Activated T-helper 2 cell treated with anti-CD3 and anti-CD28 coated beads, Interferon-gamma antibody, Interleukin-2, Interleukin-4, amounts not matched to agents 10 μg/mL and 5 μg/mL and 100 μg/mL, durations not matched to agents 14 hours and 24 hours and 36 hours (primary cell): ENCODE measurements at regions of chr15 and their contacts with region 1.

Region 1: GRCh38 chr15:82108489-82109078 is 62.8 kb upstream of the MEX3B start:
- DNase-seq: peak; percentile 59
- H3K4me3 Mint-ChIP-seq: no peak overlapping the region
- H3K27ac Mint-ChIP-seq: no peak overlapping the region
- H3K4me1 Mint-ChIP-seq: no peaks in the 10 kb centered on the region
- H3K27me3 Mint-ChIP-seq: no peaks in the 10 kb centered on the region

Region 2: DNA sequence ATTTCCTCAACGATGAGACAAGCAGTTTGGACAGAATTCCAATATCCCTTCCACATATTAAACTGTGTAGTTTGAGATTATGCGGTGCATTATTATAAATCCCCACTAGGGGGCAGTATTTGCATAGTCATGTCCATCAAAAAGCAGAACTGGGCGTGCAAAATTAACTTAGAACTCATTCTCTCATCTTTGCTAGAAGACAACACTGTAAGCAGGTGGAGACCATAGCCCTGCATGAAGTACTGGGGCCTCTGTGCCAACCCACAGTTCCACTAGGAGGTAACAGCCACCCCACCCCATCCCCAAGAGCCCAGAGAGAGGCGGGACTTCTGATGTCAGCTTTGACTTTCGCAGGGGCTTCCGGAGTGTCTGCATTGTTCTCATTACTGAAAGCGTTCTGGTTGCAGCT is 627.9 kb before region 1 on chr15:
- intact Hi-C with region 1: loop called (anchors 10 kb)
- DNase-seq: no peak
- H3K4me3 Mint-ChIP-seq: no peak overlapping the region
- H3K27ac Mint-ChIP-seq: no peak overlapping the region
- H3K4me1 Mint-ChIP-seq: no peaks in the 10 kb centered on the region
- H3K27me3 Mint-ChIP-seq: peaks cover 6% of the 10 kb centered on the region

Region 3: DNA sequence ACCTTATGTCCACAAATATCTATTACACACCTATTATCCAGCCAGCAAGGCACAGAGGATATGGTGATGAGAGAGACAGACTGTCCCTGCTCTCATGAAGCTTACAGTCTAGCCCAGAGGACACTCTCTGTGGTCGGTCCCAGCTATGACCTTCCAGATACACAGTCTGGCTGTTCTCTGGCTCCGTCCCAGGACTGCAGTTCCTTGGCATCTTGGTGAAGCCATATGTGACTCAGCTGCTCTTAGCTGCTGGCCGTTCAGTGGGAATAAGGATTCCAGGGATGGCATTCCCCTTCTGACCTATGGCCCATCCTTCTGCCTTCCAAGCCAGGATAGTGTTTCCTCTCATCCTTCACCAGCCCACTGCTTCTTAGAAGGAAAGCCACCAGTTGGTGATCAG is 93.6 kb before region 1 on chr15:
- intact Hi-C with region 1: no loop called
- DNase-seq: no peak
- H3K4me3 Mint-ChIP-seq: no peak overlapping the region
- H3K27ac Mint-ChIP-seq: no peak overlapping the region
- H3K4me1 Mint-ChIP-seq: no peaks in the 10 kb centered on the region
- H3K27me3 Mint-ChIP-seq: peaks cover 2% of the 10 kb centered on the region

Region 4: DNA sequence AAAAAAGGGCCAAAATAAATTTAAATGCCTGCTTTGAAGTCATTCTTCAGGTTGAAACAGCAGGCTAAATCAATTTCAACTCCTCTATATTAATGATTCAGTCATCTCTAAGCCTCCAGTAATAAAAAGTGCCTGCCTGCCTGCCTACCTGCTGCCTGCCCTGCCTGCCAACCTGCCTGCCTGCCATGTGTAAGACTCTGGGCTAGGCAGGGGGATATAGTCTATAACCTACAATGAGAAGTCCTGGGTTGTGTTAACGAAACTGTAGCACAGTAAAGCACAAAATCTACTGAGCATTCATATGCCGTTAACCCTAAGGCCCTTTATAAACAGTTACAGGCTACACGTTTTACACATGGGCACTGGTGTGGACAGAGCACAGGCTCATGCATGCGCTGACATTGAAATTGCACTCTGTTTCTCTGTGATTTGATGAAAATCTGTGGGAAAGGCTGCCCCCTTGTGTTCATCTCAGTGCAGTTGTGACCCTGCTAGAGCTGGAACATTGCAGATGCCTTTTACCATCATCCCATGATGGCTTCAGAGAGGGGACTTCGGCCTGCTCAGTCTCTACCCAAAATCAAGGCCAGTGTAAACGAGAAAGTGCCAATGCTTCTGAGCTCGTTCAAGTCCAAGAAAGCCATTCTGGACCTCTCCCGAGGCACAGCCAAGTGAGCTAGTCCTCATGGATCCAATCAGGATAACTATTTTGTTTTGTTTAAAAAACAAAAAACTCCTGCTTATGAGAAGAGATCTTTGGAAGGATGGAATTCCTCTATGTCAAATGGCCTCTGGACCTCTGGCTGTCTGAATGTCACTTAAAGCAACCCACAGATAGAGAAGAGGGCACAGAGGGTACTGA is 89.4 kb after region 1 on chr15:
- intact Hi-C with region 1: loop called (anchors 1 kb)
- DNase-seq: peak; percentile 35
- H3K4me3 Mint-ChIP-seq: no peak overlapping the region
- H3K27ac Mint-ChIP-seq: no peak overlapping the region
- H3K4me1 Mint-ChIP-seq: no peaks in the 10 kb centered on the region
- H3K27me3 Mint-ChIP-seq: no peaks in the 10 kb centered on the region